OCI-LY7 (cell line): ENCODE measurements at regions of chr1 and their contacts with region 1.

Region 1: GRCh38 chr1:198598796-198599321 is 40.0 kb upstream of the PTPRC start:
- DNase-seq: peak; percentile 99
- H3K4me3 ChIP-seq: peak overlapping the region; percentile 76
- H3K27ac ChIP-seq: peak overlapping the region; percentile 90
- H3K4me1 ChIP-seq: peaks cover 53% of the 10 kb centered on the region
- CTCF ChIP-seq: 0 out of 2 replicates have a peak, but pooled peaks have one; percentile 14

Region 2: DNA sequence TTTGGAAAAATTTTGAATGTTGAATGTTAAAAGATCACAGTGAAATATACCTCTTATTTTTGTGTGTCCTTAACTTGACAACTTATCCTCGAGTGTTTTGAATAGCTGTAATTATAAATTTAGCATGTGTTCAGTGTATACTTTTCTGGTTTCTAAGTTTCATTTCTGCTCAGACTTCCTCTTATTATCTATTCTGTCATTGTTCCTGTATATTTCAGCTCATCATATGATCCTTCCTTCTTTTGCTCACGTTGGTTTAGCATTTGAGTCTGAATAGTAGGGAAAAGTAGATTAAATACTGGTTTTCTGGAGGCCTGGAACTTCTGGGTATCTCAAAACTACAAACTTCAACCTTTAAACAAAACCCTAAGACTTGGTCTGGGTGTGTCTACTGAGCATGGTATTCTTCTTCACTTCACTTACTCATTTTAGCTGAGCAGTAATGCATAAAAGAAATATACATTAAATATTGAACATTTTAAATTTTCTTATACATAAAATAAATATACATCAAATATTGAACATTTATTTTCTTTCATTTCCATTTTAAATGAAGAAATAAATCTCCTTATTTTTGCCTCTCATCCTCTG is 55.1 kb before region 1 on chr1:
- CTCF ChIA-PET with region 1: no interaction called
- POLR2A ChIA-PET with region 1: interaction called, 9 read pairs
- intact Hi-C with region 1: loop called (anchors 2 kb)
- DNase-seq: peak; percentile 58
- H3K4me3 ChIP-seq: peak overlapping the region; percentile 41
- H3K27ac ChIP-seq: peak overlapping the region; percentile 71
- H3K4me1 ChIP-seq: peaks cover 54% of the 10 kb centered on the region
- CTCF ChIP-seq: no peak

Region 3: GRCh38 chr1:198575798-198576641 is 22.8 kb before region 1 on chr1:
- CTCF ChIA-PET with region 1: no interaction called
- POLR2A ChIA-PET with region 1: interaction called, 22 read pairs
- intact Hi-C with region 1: no loop called
- DNase-seq: no peak
- H3K4me3 ChIP-seq: no peak overlapping the region
- H3K27ac ChIP-seq: no peak overlapping the region
- H3K4me1 ChIP-seq: peaks cover 8% of the 10 kb centered on the region
- CTCF ChIP-seq: no peak

Region 4: GRCh38 chr1:198638894-198639635 is 40.2 kb after region 1 on chr1 and contains the start of gene PTPRC:
- CTCF ChIA-PET with region 1: no interaction called
- POLR2A ChIA-PET with region 1: interaction called, 98 read pairs
- intact Hi-C with region 1: loop called (anchors 1 kb)
- DNase-seq: peak; percentile 88
- H3K4me3 ChIP-seq: peak within 1 kb of the TSS; percentile 87
- H3K27ac ChIP-seq: peak within 1 kb of the TSS; percentile 96
- H3K4me1 ChIP-seq: peaks cover 63% of the 10 kb centered on the region
- CTCF ChIP-seq: no peak
- total RNA-seq, gene PTPRC: 161 and 177 TPM in 2 replicates

Region 5: DNA sequence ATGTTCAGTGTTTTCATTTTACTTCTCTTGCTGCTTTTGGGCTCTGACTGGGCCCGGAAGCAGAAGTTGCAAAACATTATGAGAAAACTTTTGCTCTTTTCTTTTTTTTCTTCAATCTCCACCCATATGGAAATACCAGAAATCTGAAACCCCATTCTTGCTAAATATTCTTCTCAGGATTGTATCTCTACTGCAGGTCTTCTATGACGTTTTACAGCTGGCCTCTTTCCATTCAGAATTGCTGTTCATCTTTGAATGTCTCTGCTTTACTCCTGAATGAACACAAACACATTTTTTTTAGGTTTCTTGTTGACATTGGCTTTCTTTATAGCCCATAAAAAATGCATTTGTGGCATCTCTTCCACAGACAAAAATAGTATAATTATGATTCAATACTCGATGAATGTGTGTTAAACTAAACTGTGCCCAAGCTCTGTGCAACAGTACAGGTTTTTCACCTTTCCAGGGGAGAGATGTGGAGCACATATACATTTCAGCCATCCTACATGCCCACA is 58.7 kb after region 1 on chr1:
- CTCF ChIA-PET with region 1: no interaction called
- POLR2A ChIA-PET with region 1: interaction called, 15 read pairs
- intact Hi-C with region 1: no loop called
- DNase-seq: peak; percentile 73
- H3K4me3 ChIP-seq: peak overlapping the region; percentile 58
- H3K27ac ChIP-seq: peak overlapping the region; percentile 86
- H3K4me1 ChIP-seq: peaks cover 84% of the 10 kb centered on the region
- CTCF ChIP-seq: no peak

Region 6: GRCh38 chr1:198937231-198938031 is 338.6 kb after region 1 on chr1:
- CTCF ChIA-PET with region 1: no interaction called
- POLR2A ChIA-PET with region 1: interaction called, 8 read pairs
- intact Hi-C with region 1: loop called (anchors 2 kb)
- DNase-seq: peak; percentile 94
- H3K4me3 ChIP-seq: peak overlapping the region; percentile 78
- H3K27ac ChIP-seq: peak overlapping the region; percentile 88
- H3K4me1 ChIP-seq: peaks cover 29% of the 10 kb centered on the region
- CTCF ChIP-seq: no peak